Breast epithelium (tissue), 4 donors: ENCODE measurements at regions of chr19 and their contacts with region 1.

Region 1: GRCh38 chr19:29761575-29762232 is 46.6 kb upstream of the C19orf12 start:
- DNase-seq: no peak
- H3K4me3 ChIP-seq: no peak overlapping the region
- H3K27ac ChIP-seq: no peak overlapping the region
- H3K4me1 ChIP-seq: no peaks in the 10 kb centered on the region
- H3K27me3 ChIP-seq: peaks cover 0 to 10% of the 10 kb centered on the region in 2 donors
- CTCF ChIP-seq: no peak
- POLR2A ChIP-seq: no peak

Region 2: DNA sequence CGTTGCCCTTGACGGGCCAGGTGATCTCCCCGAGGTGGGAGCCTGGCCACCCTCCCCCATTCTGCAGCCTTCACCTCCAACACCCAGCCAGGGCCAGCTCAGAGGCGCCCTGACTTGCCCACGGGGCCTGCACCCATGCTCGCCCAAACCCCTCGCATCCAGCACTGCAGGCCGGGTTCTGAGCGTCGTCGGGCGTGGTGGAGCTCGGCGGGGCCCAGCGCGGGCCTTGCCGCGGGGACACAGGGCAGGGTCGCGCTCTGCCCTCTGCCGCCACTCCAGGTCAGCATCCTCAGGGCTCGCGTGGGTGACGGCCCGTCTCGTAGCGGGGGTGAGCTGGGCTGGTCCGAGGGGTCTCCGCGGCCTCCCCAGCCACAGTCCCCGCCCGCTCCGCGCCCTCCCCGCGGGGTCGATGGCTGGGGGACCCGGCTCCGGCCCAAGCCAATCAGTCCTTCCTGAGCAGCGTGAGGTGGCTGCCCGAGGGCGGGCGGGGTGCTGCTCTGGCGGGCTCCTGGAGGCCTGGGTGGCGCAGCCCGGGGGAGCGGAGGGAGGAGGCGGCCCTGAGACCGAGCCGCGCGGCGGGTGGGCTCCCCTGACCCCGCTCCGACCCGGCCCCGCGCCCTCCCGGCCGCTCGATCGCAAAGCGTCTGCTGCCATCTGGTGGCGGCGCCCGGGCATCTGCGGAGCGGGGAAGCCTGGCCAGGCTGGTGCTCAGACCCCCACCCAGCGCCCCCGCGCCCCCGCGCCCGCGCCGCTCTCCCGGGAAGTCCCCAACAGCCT is 111.5 kb after region 1 on chr19:
- intact Hi-C with region 1: loop called (anchors 10 kb)
- DNase-seq: no peak
- H3K4me3 ChIP-seq: peak overlapping the region; percentile 33 to 66 (median 46)
- H3K27ac ChIP-seq: no peak overlapping the region
- H3K4me1 ChIP-seq: no peaks in the 10 kb centered on the region
- H3K27me3 ChIP-seq: peaks cover 13 to 49% of the 10 kb centered on the region in 2 donors
- CTCF ChIP-seq: peak in 2 of 3 donors; percentile 40 to 75
- POLR2A ChIP-seq: no peak